ENCODE measurements at regions of chr2 and their contacts with region 1.

Region 1: GRCh38 chr2:172710584-172711024 is 25.0 kb upstream of the RAPGEF4 start:
- DNase-seq: peak in 13 of 14 experiments; percentile 14 to 59 (median 35)
- ATAC-seq: no peak
- H3K4me3 ChIP-seq: no peak overlapping the region
- H3K4me3 Mint-ChIP-seq: no peak overlapping the region
- H3K27ac ChIP-seq: no peak overlapping the region
- H3K27ac Mint-ChIP-seq: no peak overlapping the region
- H3K4me1 ChIP-seq: no peaks in the 10 kb centered on the region
- H3K4me1 Mint-ChIP-seq: no peaks in the 10 kb centered on the region
- H3K27me3 ChIP-seq: no peaks in the 10 kb centered on the region
- H3K27me3 Mint-ChIP-seq: peaks cover 11% of the 10 kb centered on the region
- CTCF ChIP-seq: peak; percentile 76

Region 2: DNA sequence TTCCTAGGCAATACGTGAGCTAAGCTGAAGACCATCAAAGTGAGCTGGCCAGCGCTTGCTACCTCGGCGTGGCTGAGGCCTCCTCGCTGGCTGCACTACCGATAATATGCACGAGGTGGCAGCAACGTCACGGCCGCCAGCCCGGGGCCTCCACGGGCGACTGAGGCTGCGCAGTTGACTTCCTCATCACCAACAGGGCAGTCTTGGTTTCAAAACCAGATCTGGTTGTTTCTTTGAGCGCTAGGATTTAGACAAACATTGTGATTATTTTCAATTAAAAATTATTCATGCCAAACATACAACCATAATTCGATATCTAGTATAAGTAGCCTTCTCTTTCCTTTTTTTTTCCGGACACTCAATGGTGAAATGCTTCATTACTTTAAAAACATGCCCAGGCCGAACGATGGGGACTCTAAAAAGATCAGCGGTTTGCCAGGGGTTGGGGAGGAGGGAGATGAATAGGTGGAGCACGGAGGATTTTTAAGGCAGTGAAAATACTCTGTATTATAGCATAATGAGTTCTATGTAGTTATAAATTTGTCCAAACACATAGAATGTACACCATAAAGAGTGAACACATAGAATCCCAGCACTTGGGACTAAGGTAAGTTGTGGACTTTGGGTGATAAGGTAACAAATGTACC is 1136.3 kb before region 1 on chr2:
- CTCF ChIA-PET with region 1: no interaction called
- POLR2A ChIA-PET with region 1: no interaction called
- intact Hi-C with region 1: loop called (anchors 1 to 10 kb)
- DNase-seq: peak; percentile 67 to 88 (median 76)
- ATAC-seq: peak; percentile 99
- H3K4me3 ChIP-seq: no peak overlapping the region
- H3K4me3 Mint-ChIP-seq: no peak overlapping the region
- H3K27ac ChIP-seq: no peak overlapping the region
- H3K27ac Mint-ChIP-seq: peak overlapping the region; percentile 54
- H3K4me1 ChIP-seq: peaks cover 6% of the 10 kb centered on the region
- H3K4me1 Mint-ChIP-seq: peaks cover 6% of the 10 kb centered on the region
- H3K27me3 ChIP-seq: no peaks in the 10 kb centered on the region
- H3K27me3 Mint-ChIP-seq: no peaks in the 10 kb centered on the region
- CTCF ChIP-seq: peak; percentile 92

Region 3: DNA sequence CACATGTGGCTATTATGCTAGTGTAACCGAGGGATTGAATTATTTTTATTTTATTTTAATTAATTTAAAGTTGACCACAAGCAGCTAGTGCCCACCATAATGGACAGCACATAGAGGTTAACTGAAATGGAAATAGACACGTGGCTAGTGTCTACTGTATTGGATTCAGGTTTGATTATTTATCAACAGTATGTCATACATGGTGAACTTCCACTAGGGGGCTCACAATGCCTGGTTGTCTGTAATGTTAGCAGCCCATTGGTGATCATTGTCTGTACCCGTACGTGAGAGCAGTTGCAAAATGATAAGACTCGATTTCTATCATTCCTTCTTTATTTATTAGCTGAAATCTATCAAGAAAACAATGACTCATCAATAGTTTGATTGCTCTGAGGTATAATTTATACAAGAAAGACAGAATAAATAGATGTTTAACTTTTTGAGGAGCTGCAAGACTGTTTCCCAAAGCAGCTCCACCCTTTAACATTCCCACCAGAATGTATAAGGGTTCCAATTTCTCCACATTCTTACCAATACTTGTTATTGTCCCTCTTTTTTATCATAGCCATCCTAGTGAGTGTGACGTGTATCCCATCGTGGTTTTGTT is 1111.8 kb before region 1 on chr2:
- CTCF ChIA-PET with region 1: interaction called, 4 read pairs
- POLR2A ChIA-PET with region 1: no interaction called
- intact Hi-C with region 1: loop called in 1 of 2 experiments (anchors 2 kb)
- DNase-seq: peak in 12 of 14 experiments; percentile 1 to 75 (median 28)
- ATAC-seq: peak; percentile 92
- H3K4me3 ChIP-seq: no peak overlapping the region
- H3K4me3 Mint-ChIP-seq: no peak overlapping the region
- H3K27ac ChIP-seq: no peak overlapping the region
- H3K27ac Mint-ChIP-seq: no peak overlapping the region
- H3K4me1 ChIP-seq: no peaks in the 10 kb centered on the region
- H3K4me1 Mint-ChIP-seq: peaks cover 6% of the 10 kb centered on the region
- H3K27me3 ChIP-seq: no peaks in the 10 kb centered on the region
- H3K27me3 Mint-ChIP-seq: no peaks in the 10 kb centered on the region
- CTCF ChIP-seq: peak; percentile 92

Region 4: DNA sequence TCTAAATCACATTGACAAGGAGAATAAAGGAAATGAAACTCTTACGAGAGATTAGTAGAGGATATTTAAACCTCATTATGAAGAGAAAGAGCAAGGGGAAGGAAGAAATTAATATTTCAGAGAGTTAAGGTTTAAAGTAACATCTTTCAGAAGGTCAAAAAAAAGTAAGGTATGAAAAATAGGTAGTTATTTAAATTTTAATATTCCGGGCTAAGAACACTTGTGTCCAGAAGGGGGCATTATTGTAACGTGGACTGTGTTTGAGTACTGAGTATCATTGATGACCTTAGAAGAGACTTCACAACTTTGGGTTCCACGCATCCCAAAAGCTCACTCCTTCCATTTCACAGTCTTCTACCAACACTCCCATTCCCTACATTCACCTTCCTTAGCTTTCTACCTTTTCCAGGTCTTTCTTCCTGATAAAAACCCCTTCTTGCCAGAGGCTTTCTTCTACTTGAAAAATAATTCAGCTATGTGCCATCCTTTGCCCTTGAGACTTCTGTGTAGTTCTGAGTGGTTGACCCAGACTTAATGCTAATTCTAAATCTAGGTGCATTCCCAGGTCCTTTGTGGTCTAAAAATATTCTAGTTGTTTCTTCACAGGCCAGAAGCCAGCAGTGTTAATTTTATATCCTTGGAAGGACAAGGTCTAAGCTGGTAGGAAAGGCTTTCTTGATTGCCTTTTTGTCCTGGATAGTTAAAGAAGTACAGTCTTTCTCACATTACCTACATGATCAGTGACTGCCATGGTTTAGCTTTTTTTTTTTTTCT is 1006.8 kb before region 1 on chr2:
- CTCF ChIA-PET with region 1: interaction called, 3 read pairs
- POLR2A ChIA-PET with region 1: no interaction called
- intact Hi-C with region 1: loop called in 1 of 2 experiments (anchors 2 kb)
- DNase-seq: peak in 4 of 14 experiments; percentile 5 to 59 (median 50)
- ATAC-seq: peak; percentile 52
- H3K4me3 ChIP-seq: no peak overlapping the region
- H3K4me3 Mint-ChIP-seq: no peak overlapping the region
- H3K27ac ChIP-seq: no peak overlapping the region
- H3K27ac Mint-ChIP-seq: peak overlapping the region; percentile 11
- H3K4me1 ChIP-seq: no peaks in the 10 kb centered on the region
- H3K4me1 Mint-ChIP-seq: peaks cover 17% of the 10 kb centered on the region
- H3K27me3 ChIP-seq: no peaks in the 10 kb centered on the region
- H3K27me3 Mint-ChIP-seq: no peaks in the 10 kb centered on the region
- CTCF ChIP-seq: peak; percentile 50

Region 5: DNA sequence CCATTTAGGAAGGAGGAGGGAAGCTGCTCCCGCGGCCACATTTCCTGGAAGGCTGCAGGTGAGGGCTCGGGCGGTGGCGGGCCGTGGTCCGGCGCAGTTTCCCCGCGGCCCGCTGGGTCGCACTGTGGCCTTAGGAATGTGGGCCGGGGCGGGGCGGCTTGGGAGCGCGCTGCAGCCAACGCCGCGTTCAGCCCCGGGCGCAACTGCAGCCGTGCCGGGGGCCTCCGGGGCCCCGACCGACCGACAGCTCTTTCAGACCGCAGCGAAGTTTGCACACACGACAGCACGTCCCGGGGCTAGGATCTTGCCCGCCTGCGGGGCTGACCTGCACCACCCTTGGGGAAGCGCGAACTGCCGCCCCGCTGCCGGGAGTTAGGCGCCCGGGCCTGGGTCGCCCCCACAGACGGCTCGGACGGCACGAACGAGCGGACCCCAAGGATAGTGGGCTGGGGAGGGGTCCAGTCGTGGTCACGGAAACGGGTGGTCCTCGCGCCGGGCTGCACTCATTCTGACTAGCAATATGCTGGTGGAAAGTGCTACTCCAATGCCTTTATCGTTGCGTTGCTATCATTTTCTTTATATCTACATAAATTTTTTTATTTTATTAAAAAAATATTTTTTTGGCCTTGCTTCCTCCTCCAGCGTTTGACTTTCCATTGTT is 538.0 kb before region 1 on chr2:
- CTCF ChIA-PET with region 1: interaction called, 3 read pairs
- POLR2A ChIA-PET with region 1: no interaction called
- intact Hi-C with region 1: loop called (anchors 2 to 10 kb)
- DNase-seq: peak in 13 of 14 experiments; percentile 45 to 83 (median 60)
- ATAC-seq: peak; percentile 96
- H3K4me3 ChIP-seq: peak overlapping the region; percentile 59
- H3K4me3 Mint-ChIP-seq: peak overlapping the region; percentile 74
- H3K27ac ChIP-seq: no peak overlapping the region
- H3K27ac Mint-ChIP-seq: no peak overlapping the region
- H3K4me1 ChIP-seq: peaks cover 12% of the 10 kb centered on the region
- H3K4me1 Mint-ChIP-seq: no peaks in the 10 kb centered on the region
- H3K27me3 ChIP-seq: peaks cover 0 to 6% of the 10 kb centered on the region in 2 experiments
- H3K27me3 Mint-ChIP-seq: no peaks in the 10 kb centered on the region
- CTCF ChIP-seq: peak; percentile 64

Region 6: GRCh38 chr2:172588931-172589330 is 121.7 kb before region 1 on chr2:
- CTCF ChIA-PET with region 1: no interaction called
- POLR2A ChIA-PET with region 1: no interaction called
- intact Hi-C with region 1: loop called (anchors 1 to 5 kb)
- DNase-seq: no peak
- ATAC-seq: no peak
- H3K4me3 ChIP-seq: no peak overlapping the region
- H3K4me3 Mint-ChIP-seq: no peak overlapping the region
- H3K27ac ChIP-seq: no peak overlapping the region
- H3K27ac Mint-ChIP-seq: no peak overlapping the region
- H3K4me1 ChIP-seq: peaks cover 9% of the 10 kb centered on the region
- H3K4me1 Mint-ChIP-seq: peaks cover 43% of the 10 kb centered on the region
- H3K27me3 ChIP-seq: no peaks in the 10 kb centered on the region
- H3K27me3 Mint-ChIP-seq: no peaks in the 10 kb centered on the region
- CTCF ChIP-seq: no peak